Ascending aorta (tissue), 2 donors: ENCODE measurements at regions of chr4 and their contacts with region 1.

Region 1: DNA sequence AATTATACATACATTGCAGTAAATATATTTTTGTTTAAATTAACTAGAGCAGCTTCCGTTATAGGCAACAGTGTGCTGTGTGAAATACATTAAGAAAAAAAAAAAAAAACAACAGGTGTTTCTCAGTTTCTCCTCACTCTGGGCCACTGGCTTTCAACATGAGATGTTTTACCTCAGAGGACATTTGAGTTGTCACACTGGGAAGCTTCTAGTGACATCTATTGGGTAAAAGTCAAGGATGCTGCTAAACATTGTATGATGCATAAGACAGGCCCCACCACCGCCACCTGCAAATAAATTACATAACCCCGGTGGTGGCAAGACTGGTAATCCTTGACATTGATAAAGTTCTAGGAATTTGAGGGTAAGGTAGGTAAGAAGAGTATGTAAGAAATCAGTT is 1512.2 kb downstream of the C4orf33 start:
- DNase-seq: no peak
- H3K4me3 ChIP-seq: no peak overlapping the region
- H3K27ac ChIP-seq: no peak overlapping the region
- H3K4me1 ChIP-seq: no peaks in the 10 kb centered on the region
- H3K27me3 ChIP-seq: no peaks in the 10 kb centered on the region
- CTCF ChIP-seq: no peak

Region 2: GRCh38 chr4:130698251-130698650 is 90.1 kb after region 1 on chr4:
- intact Hi-C with region 1: loop called (anchors 5 kb)
- DNase-seq: no peak
- H3K4me3 ChIP-seq: no peak overlapping the region
- H3K27ac ChIP-seq: no peak overlapping the region
- H3K4me1 ChIP-seq: no peaks in the 10 kb centered on the region
- H3K27me3 ChIP-seq: no peaks in the 10 kb centered on the region
- CTCF ChIP-seq: no peak